ENCODE measurements at regions of chr18 and their contacts with region 1.

Region 1: GRCh38 chr18:5879479-5879882 is 15.8 kb downstream of the TMEM200C start:
- DNase-seq: no peak
- H3K4me3 ChIP-seq: no peak overlapping the region
- H3K27ac ChIP-seq: no peak overlapping the region
- H3K4me1 ChIP-seq: no peaks in the 10 kb centered on the region
- H3K27me3 ChIP-seq: peaks cover 0 to 18% of the 10 kb centered on the region in 2 donors
- CTCF ChIP-seq: peak; percentile 56 to 60

Region 2: DNA sequence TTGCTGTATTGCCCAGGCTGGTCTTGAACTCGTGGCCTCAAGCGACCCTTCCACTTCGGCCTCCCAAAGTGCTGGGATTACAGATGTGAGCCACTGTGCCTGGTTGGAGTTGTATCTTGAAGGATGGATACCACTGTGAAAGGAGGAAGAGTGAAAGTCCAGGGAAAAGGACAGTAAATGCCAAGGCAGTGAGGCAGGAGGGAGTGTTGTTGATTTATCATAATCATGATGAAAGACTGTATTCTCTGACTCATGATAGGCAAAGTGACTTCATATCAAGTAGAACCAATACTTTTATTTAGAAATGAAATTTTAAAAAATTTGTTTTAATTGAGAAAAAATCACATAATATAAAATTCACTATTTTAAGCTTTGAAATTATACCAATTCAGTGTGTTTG is 1012.3 kb after region 1 on chr18:
- intact Hi-C with region 1: loop called (anchors 2 kb)
- DNase-seq: no peak
- H3K4me3 ChIP-seq: no peak overlapping the region
- H3K27ac ChIP-seq: no peak overlapping the region
- H3K4me1 ChIP-seq: no peaks in the 10 kb centered on the region
- H3K27me3 ChIP-seq: no peaks in the 10 kb centered on the region
- CTCF ChIP-seq: no peak